CD8-positive, alpha-beta memory T cell (primary cell): ENCODE measurements at regions of chr20 and their contacts with region 1.

Region 1: DNA sequence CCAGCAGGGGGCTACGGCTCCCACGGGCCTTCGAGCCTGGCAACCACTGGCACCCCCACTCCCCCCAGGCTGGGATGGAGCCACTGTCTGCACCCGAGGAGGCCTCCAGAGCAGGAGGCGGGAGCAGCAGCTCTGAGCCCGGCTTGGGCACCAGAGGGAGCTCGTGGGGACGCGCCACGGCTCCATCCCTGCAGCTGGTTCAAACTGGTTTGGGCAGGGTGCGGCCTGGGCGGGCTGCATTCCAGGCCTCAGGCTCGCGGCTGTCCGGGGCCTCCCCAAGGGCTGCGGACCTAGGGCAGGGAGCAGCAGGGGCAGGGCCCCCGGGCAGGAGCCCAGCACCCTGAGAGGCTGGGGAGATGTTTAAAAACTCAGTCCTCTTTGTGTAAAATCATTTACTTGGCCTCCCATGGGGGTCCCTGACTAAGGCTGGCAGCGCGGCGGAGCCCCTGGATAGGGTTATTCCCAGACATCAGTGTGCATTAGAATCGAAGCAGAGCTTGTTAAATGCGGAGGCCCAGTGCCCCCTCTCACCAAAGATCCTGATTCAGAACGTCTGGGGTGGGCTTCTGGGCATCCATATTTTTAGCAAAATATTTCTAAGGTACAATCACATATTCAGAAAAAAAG is 4.1 kb upstream of the BCAS4 start:
- DNase-seq: peak; percentile 62 to 83 (median 68)
- H3K4me3 ChIP-seq: peak overlapping the region; percentile 55
- H3K4me3 Mint-ChIP-seq: peak overlapping the region in 2 of 7 donors; percentile 37 to 41
- H3K27ac ChIP-seq: peak overlapping the region; percentile 79
- H3K27ac Mint-ChIP-seq: peak overlapping the region in 7 of 8 donors; percentile 11 to 77 (median 61)
- H3K4me1 ChIP-seq: peaks cover 20% of the 10 kb centered on the region
- H3K4me1 Mint-ChIP-seq: peaks cover 9 to 21% (median 12%) of the 10 kb centered on the region in 3 donors
- H3K27me3 ChIP-seq: no peaks in the 10 kb centered on the region
- H3K27me3 Mint-ChIP-seq: no peaks in the 10 kb centered on the region

Region 2: DNA sequence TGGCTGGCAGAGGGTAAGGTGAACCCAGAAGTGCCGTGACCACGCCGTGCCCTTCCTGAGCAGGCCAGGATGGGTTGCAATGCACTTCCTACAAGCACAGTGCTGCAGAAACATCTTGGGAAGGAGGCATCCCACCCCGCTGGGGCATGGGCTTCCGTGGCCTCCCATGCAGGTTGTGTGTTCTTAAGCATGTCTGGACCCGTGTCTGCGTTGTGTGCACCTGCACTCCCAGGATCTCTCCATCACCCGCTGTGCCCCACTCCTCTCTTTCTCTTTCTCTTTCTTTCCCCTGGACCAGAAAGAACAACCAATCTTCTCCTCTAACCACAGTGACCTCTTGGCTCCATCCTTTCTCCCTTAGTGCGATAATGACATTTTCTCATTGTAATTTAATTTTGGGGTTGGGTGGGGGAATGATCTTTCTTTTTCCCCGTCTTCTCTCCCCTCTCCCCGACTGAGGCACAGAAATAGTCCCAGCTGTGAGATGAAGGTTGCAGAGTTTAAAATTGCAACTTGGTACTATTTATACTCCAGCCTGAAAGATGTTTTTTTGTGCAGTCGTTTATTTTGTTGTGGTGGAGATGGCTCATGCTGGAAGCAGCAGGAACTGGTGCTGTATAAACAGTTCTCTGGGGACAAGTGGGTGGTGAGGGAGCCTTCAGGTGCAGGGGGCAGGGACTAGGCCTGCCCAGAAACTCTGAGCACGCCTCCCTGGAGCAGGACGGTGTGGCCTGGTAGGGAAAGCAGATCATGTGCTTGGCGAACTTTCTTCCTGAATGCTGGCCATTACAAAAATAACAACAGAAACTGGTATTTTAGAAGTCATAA is 24.6 kb after region 1 on chr20:
- CTCF ChIA-PET with region 1: interaction called, 40 read pairs
- POLR2A ChIA-PET with region 1: interaction called, 22 read pairs
- DNase-seq: peak in 1 of 5 donors; percentile 22
- H3K4me3 ChIP-seq: peak overlapping the region; percentile 10
- H3K4me3 Mint-ChIP-seq: peak overlapping the region; percentile 39 to 83 (median 55)
- H3K27ac ChIP-seq: no peak overlapping the region
- H3K27ac Mint-ChIP-seq: peak overlapping the region; percentile 11 to 85 (median 80)
- H3K4me1 ChIP-seq: peaks cover 30% of the 10 kb centered on the region
- H3K4me1 Mint-ChIP-seq: peaks cover 37 to 76% (median 40%) of the 10 kb centered on the region in 3 donors
- H3K27me3 ChIP-seq: no peaks in the 10 kb centered on the region
- H3K27me3 Mint-ChIP-seq: no peaks in the 10 kb centered on the region

Region 3: DNA sequence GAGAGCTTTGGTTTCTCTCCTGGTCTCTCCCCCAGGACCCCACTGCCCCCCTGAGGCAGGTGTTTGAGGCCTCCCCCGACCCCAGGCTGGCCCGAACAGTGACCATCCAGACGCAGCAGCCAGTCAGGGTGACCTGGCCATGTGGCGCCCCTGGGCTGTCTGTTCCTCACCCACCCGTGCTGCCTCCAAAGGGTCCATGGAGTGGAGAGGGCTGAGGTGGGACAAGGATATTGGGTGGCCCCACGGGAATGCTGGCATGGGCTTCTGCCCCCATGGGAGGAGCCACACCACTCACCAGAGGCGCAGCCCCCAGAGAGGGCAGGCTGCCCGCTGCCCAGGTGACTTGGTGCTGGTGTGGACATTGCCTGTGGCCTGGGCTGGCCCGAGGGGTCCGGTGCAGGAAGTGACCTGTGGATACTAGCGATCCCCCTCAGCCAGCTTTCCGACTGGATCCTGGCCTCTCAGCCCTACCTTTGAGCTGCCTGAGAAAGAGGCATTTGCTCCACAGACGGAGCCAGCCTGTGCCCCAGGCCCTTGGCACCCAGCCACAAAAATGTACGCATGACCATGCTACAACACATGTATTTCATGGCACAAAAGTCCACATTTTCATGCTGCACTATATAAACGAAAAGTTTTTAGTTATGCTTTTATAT is 54.9 kb after region 1 on chr20:
- CTCF ChIA-PET with region 1: interaction called, 8 read pairs
- POLR2A ChIA-PET with region 1: interaction called, 16 read pairs
- DNase-seq: no peak
- H3K4me3 ChIP-seq: no peak overlapping the region
- H3K4me3 Mint-ChIP-seq: no peak overlapping the region
- H3K27ac ChIP-seq: no peak overlapping the region
- H3K27ac Mint-ChIP-seq: peak overlapping the region in 1 of 8 donors; percentile 9
- H3K4me1 ChIP-seq: no peaks in the 10 kb centered on the region
- H3K4me1 Mint-ChIP-seq: peaks cover 12 to 43% (median 14%) of the 10 kb centered on the region in 3 donors
- H3K27me3 ChIP-seq: no peaks in the 10 kb centered on the region
- H3K27me3 Mint-ChIP-seq: no peaks in the 10 kb centered on the region

Region 4: GRCh38 chr20:50929299-50930138 is 138.8 kb after region 1 on chr20:
- CTCF ChIA-PET with region 1: interaction called, 278 read pairs
- POLR2A ChIA-PET with region 1: interaction called, 72 read pairs
- DNase-seq: peak; percentile 84 to 94 (median 90)
- H3K4me3 ChIP-seq: peak overlapping the region; percentile 74
- H3K4me3 Mint-ChIP-seq: peak overlapping the region; percentile 88 to 98 (median 96)
- H3K27ac ChIP-seq: peak overlapping the region; percentile 57
- H3K27ac Mint-ChIP-seq: peak overlapping the region; percentile 89 to 100 (median 97)
- H3K4me1 ChIP-seq: peaks cover 52% of the 10 kb centered on the region
- H3K4me1 Mint-ChIP-seq: peaks cover 49 to 64% (median 63%) of the 10 kb centered on the region in 3 donors
- H3K27me3 ChIP-seq: no peaks in the 10 kb centered on the region
- H3K27me3 Mint-ChIP-seq: no peaks in the 10 kb centered on the region

Region 5: DNA sequence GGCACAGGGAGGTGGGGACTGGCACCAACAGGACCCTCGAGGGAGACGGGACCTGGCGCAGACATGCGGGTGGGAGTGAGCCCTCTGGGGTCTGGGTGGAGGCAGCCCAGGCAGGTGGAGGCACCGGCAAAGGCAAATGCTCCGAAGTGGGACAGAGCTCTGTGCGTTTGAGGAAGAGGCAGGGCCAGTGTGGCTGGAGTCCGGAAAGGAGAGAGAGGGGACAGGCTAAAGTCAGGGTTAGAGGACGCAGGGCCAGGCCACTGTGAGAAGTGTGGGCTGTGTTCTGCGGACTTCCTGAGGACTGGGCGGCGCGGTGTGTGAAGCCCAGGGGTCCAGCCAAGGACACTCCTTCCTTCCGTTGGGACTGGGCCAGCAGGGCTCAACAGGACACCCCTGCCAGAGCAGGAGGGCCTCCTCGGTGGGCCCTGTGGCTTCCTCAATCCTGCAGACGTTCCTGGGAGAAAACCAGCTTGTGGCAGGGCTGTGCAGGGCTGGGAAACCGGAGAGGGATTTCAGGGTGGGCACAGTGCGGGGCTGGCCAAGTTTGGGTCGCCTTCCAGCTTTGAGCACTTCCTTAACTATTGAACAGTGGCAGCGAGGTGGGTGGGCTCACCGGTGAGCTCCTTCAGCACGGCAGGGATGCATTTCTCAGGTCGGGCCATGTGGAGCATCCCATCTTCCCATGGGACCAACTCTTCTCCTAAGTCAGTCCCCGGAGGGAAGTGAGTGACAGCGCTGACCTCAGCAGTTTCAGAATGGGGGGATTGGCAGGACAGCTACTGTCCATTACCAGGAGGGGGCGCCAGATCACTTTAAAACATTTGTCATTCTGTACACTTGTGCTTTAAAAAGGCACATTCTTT is 190.3 kb after region 1 on chr20:
- CTCF ChIA-PET with region 1: interaction called, 20 read pairs
- POLR2A ChIA-PET with region 1: interaction called, 3 read pairs
- DNase-seq: peak; percentile 36 to 68 (median 54)
- H3K4me3 ChIP-seq: no peak overlapping the region
- H3K4me3 Mint-ChIP-seq: no peak overlapping the region
- H3K27ac ChIP-seq: no peak overlapping the region
- H3K27ac Mint-ChIP-seq: no peak overlapping the region
- H3K4me1 ChIP-seq: peaks cover 4% of the 10 kb centered on the region
- H3K4me1 Mint-ChIP-seq: peaks cover 3 to 6% (median 4%) of the 10 kb centered on the region in 3 donors
- H3K27me3 ChIP-seq: peaks cover 6% of the 10 kb centered on the region
- H3K27me3 Mint-ChIP-seq: peaks cover 37 to 58% of the 10 kb centered on the region in 2 donors

Region 6: GRCh38 chr20:51121901-51122441 is 331.2 kb after region 1 on chr20:
- CTCF ChIA-PET with region 1: no interaction called
- POLR2A ChIA-PET with region 1: no interaction called
- DNase-seq: no peak
- H3K4me3 ChIP-seq: no peak overlapping the region
- H3K4me3 Mint-ChIP-seq: no peak overlapping the region
- H3K27ac ChIP-seq: no peak overlapping the region
- H3K27ac Mint-ChIP-seq: no peak overlapping the region
- H3K4me1 ChIP-seq: no peaks in the 10 kb centered on the region
- H3K4me1 Mint-ChIP-seq: peaks cover 4 to 11% (median 7%) of the 10 kb centered on the region in 3 donors
- H3K27me3 ChIP-seq: peaks cover 5% of the 10 kb centered on the region
- H3K27me3 Mint-ChIP-seq: peaks cover 14 to 54% of the 10 kb centered on the region in 2 donors